ENCODE measurements at regions of chr22 and their contacts with region 1.

Region 1: DNA sequence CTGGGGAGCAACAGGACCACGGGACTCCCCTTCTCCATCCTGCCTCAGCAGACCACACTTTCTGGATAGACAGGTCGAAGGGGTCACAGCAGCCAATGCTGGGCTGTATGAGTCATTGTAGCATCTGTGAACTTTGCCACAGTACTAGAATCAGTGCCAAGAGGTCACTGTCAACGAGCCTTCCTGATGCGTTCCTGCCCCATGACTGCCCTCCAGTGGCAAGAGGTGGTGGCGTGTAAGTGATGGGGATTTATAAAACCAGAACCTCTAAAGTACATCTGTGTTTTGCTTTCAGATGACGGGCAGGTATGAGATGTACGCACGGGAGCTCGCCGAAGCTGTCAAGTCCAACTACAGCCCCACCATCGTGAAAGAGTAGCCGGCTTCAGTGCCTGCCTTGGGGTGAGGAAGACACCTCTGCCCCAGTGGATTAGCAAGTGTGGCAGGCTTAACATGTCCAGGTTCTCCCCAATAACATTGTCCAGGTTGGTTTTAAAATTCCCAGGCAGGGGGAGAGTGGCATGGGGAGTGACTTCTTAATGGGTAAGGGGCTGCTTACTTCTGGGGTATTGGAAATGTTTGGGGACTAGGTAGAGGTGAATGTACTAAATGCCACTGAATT is 29.4 kb downstream of the GUCD1 start:
- DNase-seq: peak; percentile 70 to 87
- ATAC-seq: peak; percentile 94 to 99 (median 98)
- H3K4me3 ChIP-seq: no peak overlapping the region
- H3K4me3 Mint-ChIP-seq: no peak overlapping the region
- H3K27ac ChIP-seq: no peak overlapping the region
- H3K27ac Mint-ChIP-seq: peak overlapping the region in 1 of 2 donors; percentile 27
- H3K4me1 ChIP-seq: peaks cover 9% of the 10 kb centered on the region
- H3K4me1 Mint-ChIP-seq: peaks cover 11 to 12% of the 10 kb centered on the region in 2 donors
- H3K27me3 ChIP-seq: no peaks in the 10 kb centered on the region
- H3K27me3 Mint-ChIP-seq: no peaks in the 10 kb centered on the region
- CTCF ChIP-seq: peak; percentile 81

Region 2: GRCh38 chr22:24189249-24190158 is 336.0 kb before region 1 on chr22:
- intact Hi-C with region 1: loop called (anchors 10 kb)
- DNase-seq: peak in 1 of 2 donors; percentile 59
- ATAC-seq: peak; percentile 62 to 87 (median 64)
- H3K4me3 ChIP-seq: no peak overlapping the region
- H3K4me3 Mint-ChIP-seq: no peak overlapping the region
- H3K27ac ChIP-seq: no peak overlapping the region
- H3K27ac Mint-ChIP-seq: no peak overlapping the region
- H3K4me1 ChIP-seq: peaks cover 10% of the 10 kb centered on the region
- H3K4me1 Mint-ChIP-seq: no peaks in the 10 kb centered on the region
- H3K27me3 ChIP-seq: no peaks in the 10 kb centered on the region
- H3K27me3 Mint-ChIP-seq: no peaks in the 10 kb centered on the region
- CTCF ChIP-seq: peak; percentile 46

Region 3: GRCh38 chr22:24325105-24325757 is 200.3 kb before region 1 on chr22:
- intact Hi-C with region 1: loop called (anchors 1 kb)
- DNase-seq: peak in 1 of 2 donors; percentile 74
- ATAC-seq: peak; percentile 57 to 78 (median 60)
- H3K4me3 ChIP-seq: no peak overlapping the region
- H3K4me3 Mint-ChIP-seq: no peak overlapping the region
- H3K27ac ChIP-seq: no peak overlapping the region
- H3K27ac Mint-ChIP-seq: peak overlapping the region in 1 of 2 donors; percentile 64
- H3K4me1 ChIP-seq: no peaks in the 10 kb centered on the region
- H3K4me1 Mint-ChIP-seq: peaks cover 8 to 12% of the 10 kb centered on the region in 2 donors
- H3K27me3 ChIP-seq: no peaks in the 10 kb centered on the region
- H3K27me3 Mint-ChIP-seq: no peaks in the 10 kb centered on the region
- CTCF ChIP-seq: peak; percentile 64

Region 4: GRCh38 chr22:24423519-24424000 is 102.0 kb before region 1 on chr22:
- intact Hi-C with region 1: loop called (anchors 1 kb)
- DNase-seq: peak; percentile 72 to 81
- ATAC-seq: peak; percentile 55 to 71 (median 71)
- H3K4me3 ChIP-seq: no peak overlapping the region
- H3K4me3 Mint-ChIP-seq: peak overlapping the region; percentile 71
- H3K27ac ChIP-seq: no peak overlapping the region
- H3K27ac Mint-ChIP-seq: no peak overlapping the region
- H3K4me1 ChIP-seq: peaks cover 47% of the 10 kb centered on the region
- H3K4me1 Mint-ChIP-seq: peaks cover 32 to 37% of the 10 kb centered on the region in 2 donors
- H3K27me3 ChIP-seq: no peaks in the 10 kb centered on the region
- H3K27me3 Mint-ChIP-seq: peaks cover 9 to 14% of the 10 kb centered on the region in 2 donors
- CTCF ChIP-seq: peak; percentile 85

Region 5: GRCh38 chr22:24471570-24471969 is 54.0 kb before region 1 on chr22:
- intact Hi-C with region 1: no loop called
- DNase-seq: no peak
- ATAC-seq: no peak
- H3K4me3 ChIP-seq: no peak overlapping the region
- H3K4me3 Mint-ChIP-seq: peak overlapping the region; percentile 5
- H3K27ac ChIP-seq: no peak overlapping the region
- H3K27ac Mint-ChIP-seq: no peak overlapping the region
- H3K4me1 ChIP-seq: no peaks in the 10 kb centered on the region
- H3K4me1 Mint-ChIP-seq: no peaks in the 10 kb centered on the region
- H3K27me3 ChIP-seq: no peaks in the 10 kb centered on the region
- H3K27me3 Mint-ChIP-seq: no peaks in the 10 kb centered on the region
- CTCF ChIP-seq: no peak

Region 6: GRCh38 chr22:24482575-24482974 is 43.0 kb before region 1 on chr22:
- intact Hi-C with region 1: no loop called
- DNase-seq: no peak
- ATAC-seq: no peak
- H3K4me3 ChIP-seq: no peak overlapping the region
- H3K4me3 Mint-ChIP-seq: no peak overlapping the region
- H3K27ac ChIP-seq: no peak overlapping the region
- H3K27ac Mint-ChIP-seq: no peak overlapping the region
- H3K4me1 ChIP-seq: no peaks in the 10 kb centered on the region
- H3K4me1 Mint-ChIP-seq: no peaks in the 10 kb centered on the region
- H3K27me3 ChIP-seq: no peaks in the 10 kb centered on the region
- H3K27me3 Mint-ChIP-seq: peaks cover 0 to 2% of the 10 kb centered on the region in 2 donors
- CTCF ChIP-seq: no peak

Measured in natural killer cell (primary cell).